Activated CD4-positive, alpha-beta T cell treated with anti-CD3 and anti-CD28 coated beads for 36 hours (primary cell): ENCODE measurements at regions of chr2 and their contacts with region 1.

Region 1: GRCh38 chr2:75960134-75961009 is 249.7 kb upstream of the GCFC2 start:
- DNase-seq: no peak
- ATAC-seq: no peak
- H3K4me3 Mint-ChIP-seq: no peak overlapping the region
- H3K27ac Mint-ChIP-seq: no peak overlapping the region
- H3K4me1 Mint-ChIP-seq: no peaks in the 10 kb centered on the region
- H3K27me3 Mint-ChIP-seq: no peaks in the 10 kb centered on the region

Region 2: GRCh38 chr2:76310894-76311630 is 350.7 kb after region 1 on chr2:
- CTCF ChIA-PET with region 1: no interaction called
- POLR2A ChIA-PET with region 1: no interaction called
- intact Hi-C with region 1: loop called in 1 of 2 experiments (anchors 10 kb)
- DNase-seq: no peak
- ATAC-seq: no peak
- H3K4me3 Mint-ChIP-seq: no peak overlapping the region
- H3K27ac Mint-ChIP-seq: no peak overlapping the region
- H3K4me1 Mint-ChIP-seq: no peaks in the 10 kb centered on the region
- H3K27me3 Mint-ChIP-seq: no peaks in the 10 kb centered on the region